ENCODE measurements at regions of chr1 and their contacts with region 1.

Region 1: GRCh38 chr1:2290595-2291510 is 62.7 kb downstream of the SKI start:
- DNase-seq: peak; percentile 89
- ATAC-seq: peak; percentile 81
- H3K4me3 ChIP-seq: peak overlapping the region in 4 of 5 experiments; percentile 36 to 54 (median 42)
- H3K4me3 Mint-ChIP-seq: peak overlapping the region; percentile 83
- H3K27ac ChIP-seq: peak overlapping the region; percentile 29 to 73
- H3K27ac Mint-ChIP-seq: peak overlapping the region; percentile 84
- H3K4me1 ChIP-seq: peaks cover 57 to 77% of the 10 kb centered on the region in 2 donors
- H3K4me1 Mint-ChIP-seq: peaks cover 79% of the 10 kb centered on the region
- H3K27me3 ChIP-seq: no peaks in the 10 kb centered on the region
- H3K27me3 Mint-ChIP-seq: no peaks in the 10 kb centered on the region
- CTCF ChIP-seq: no peak

Region 2: GRCh38 chr1:2233997-2234761 is 56.7 kb before region 1 on chr1:
- CTCF ChIA-PET with region 1: interaction called, 5 read pairs
- POLR2A ChIA-PET with region 1: interaction called, 3 read pairs
- intact Hi-C with region 1: loop called (anchors 2 kb)
- DNase-seq: peak; percentile 78
- ATAC-seq: peak; percentile 79
- H3K4me3 ChIP-seq: peak overlapping the region in 4 of 5 experiments; percentile 3 to 49 (median 36)
- H3K4me3 Mint-ChIP-seq: peak overlapping the region; percentile 86
- H3K27ac ChIP-seq: peak overlapping the region; percentile 31 to 93
- H3K27ac Mint-ChIP-seq: peak overlapping the region; percentile 97
- H3K4me1 ChIP-seq: peaks cover 77 to 96% of the 10 kb centered on the region in 2 donors
- H3K4me1 Mint-ChIP-seq: peaks cover 81% of the 10 kb centered on the region
- H3K27me3 ChIP-seq: no peaks in the 10 kb centered on the region
- H3K27me3 Mint-ChIP-seq: no peaks in the 10 kb centered on the region
- CTCF ChIP-seq: no peak

Region 3: GRCh38 chr1:2275796-2276536 is 14.9 kb before region 1 on chr1:
- CTCF ChIA-PET with region 1: no interaction called
- POLR2A ChIA-PET with region 1: no interaction called
- intact Hi-C with region 1: loop called (anchors 2 kb)
- DNase-seq: no peak
- ATAC-seq: peak; percentile 65
- H3K4me3 ChIP-seq: no peak overlapping the region
- H3K4me3 Mint-ChIP-seq: peak overlapping the region; percentile 34
- H3K27ac ChIP-seq: peak overlapping the region in 1 of 2 donors; percentile 54
- H3K27ac Mint-ChIP-seq: peak overlapping the region; percentile 56
- H3K4me1 ChIP-seq: peaks cover 48 to 59% of the 10 kb centered on the region in 2 donors
- H3K4me1 Mint-ChIP-seq: peaks cover 68% of the 10 kb centered on the region
- H3K27me3 ChIP-seq: no peaks in the 10 kb centered on the region
- H3K27me3 Mint-ChIP-seq: no peaks in the 10 kb centered on the region
- CTCF ChIP-seq: no peak

Measured in B cell (primary cell).